Activated CD8-positive, alpha-beta T cell treated with anti-CD3 and anti-CD28 coated beads for 36 hours (primary cell): ENCODE measurements at regions of chr4 and their contacts with region 1.

Region 1: GRCh38 chr4:13548984-13549546 is 4.8 kb upstream of the NKX3-2 start:
- DNase-seq: peak; percentile 95
- ATAC-seq: peak; percentile 71
- H3K4me3 Mint-ChIP-seq: peak overlapping the region; percentile 72
- H3K27ac Mint-ChIP-seq: peak overlapping the region; percentile 8
- H3K4me1 Mint-ChIP-seq: peaks cover 27% of the 10 kb centered on the region
- H3K27me3 Mint-ChIP-seq: peaks cover 58% of the 10 kb centered on the region
- CTCF ChIP-seq: peak; percentile 87

Region 2: GRCh38 chr4:12729384-12729783 is 819.7 kb before region 1 on chr4:
- CTCF ChIA-PET with region 1: interaction called, 11 read pairs
- POLR2A ChIA-PET with region 1: no interaction called
- intact Hi-C with region 1: loop called (anchors 1 kb)
- DNase-seq: no peak
- ATAC-seq: no peak
- H3K4me3 Mint-ChIP-seq: no peak overlapping the region
- H3K27ac Mint-ChIP-seq: no peak overlapping the region
- H3K4me1 Mint-ChIP-seq: no peaks in the 10 kb centered on the region
- H3K27me3 Mint-ChIP-seq: peaks cover 11% of the 10 kb centered on the region
- CTCF ChIP-seq: peak; percentile 81

Region 3: DNA sequence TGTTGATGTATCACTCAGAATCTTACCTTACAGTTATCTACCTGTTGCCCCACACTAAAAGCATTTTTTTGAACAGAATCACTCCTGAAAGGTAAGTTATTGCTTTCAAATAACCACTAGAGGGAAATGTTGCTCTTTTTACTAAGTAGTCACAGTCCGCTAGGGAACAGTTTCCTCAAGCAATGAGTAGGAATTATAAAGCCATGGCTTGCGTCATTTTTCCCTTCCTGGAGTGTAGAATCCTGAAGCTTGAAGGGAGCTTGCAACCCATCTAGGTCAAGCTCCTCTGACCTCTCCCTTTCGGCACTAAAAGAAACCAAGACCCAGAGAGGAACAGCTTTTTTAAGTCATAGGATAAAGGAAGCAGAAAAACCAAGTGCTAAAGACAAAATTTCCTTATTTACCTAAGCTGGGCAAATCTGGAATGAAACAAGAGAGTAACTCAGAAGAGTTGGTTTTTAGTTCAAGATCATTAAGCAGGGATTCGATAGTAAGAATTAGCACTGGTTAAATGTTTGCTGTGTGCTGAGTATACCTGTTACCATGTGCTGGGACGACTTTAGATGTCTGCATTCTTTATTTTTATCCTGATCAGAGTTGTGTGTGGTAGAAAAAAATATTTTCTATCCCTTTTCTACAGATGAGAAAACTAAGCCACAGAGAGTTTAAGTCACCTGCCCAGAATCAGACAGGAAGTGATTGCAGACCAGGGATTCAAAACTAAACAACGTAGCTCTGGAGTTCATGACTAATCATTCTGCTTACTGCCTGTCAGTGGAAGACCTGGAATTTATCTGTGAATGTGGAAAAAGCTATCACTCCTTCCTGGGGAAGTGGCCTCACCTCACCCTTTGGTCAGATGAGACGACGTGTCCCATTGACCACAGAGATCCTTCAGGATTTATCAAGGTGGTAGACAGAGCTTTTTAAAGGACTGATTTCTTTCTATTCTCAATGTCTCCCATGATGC is 696.4 kb before region 1 on chr4:
- CTCF ChIA-PET with region 1: interaction called, 25 read pairs
- POLR2A ChIA-PET with region 1: no interaction called
- intact Hi-C with region 1: loop called (anchors 2 kb)
- DNase-seq: no peak
- ATAC-seq: no peak
- H3K4me3 Mint-ChIP-seq: no peak overlapping the region
- H3K27ac Mint-ChIP-seq: no peak overlapping the region
- H3K4me1 Mint-ChIP-seq: no peaks in the 10 kb centered on the region
- H3K27me3 Mint-ChIP-seq: peaks cover 7% of the 10 kb centered on the region
- CTCF ChIP-seq: peak; percentile 55

Region 4: DNA sequence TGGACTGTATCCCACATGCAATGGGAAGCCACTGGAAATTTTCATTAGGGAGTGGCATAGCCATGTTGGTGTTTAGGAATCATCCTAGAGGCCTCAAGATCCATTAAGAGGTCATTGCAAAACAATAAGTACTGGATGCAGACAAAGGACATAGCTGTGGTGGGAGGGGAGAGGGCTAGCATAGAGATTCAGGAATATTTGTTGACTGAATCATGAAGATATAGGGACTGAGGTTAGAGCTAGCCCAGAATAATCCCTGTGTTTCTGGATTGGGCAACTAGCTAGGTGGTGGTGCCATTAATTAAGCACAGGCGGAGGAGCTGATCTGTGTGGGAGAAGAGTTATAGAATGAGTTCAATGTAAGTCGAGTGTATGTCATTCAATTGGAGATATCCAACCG is 200.0 kb before region 1 on chr4:
- CTCF ChIA-PET with region 1: no interaction called
- POLR2A ChIA-PET with region 1: no interaction called
- intact Hi-C with region 1: no loop called
- DNase-seq: no peak
- ATAC-seq: no peak
- H3K4me3 Mint-ChIP-seq: no peak overlapping the region
- H3K27ac Mint-ChIP-seq: no peak overlapping the region
- H3K4me1 Mint-ChIP-seq: no peaks in the 10 kb centered on the region
- H3K27me3 Mint-ChIP-seq: no peaks in the 10 kb centered on the region
- CTCF ChIP-seq: no peak

Region 5: DNA sequence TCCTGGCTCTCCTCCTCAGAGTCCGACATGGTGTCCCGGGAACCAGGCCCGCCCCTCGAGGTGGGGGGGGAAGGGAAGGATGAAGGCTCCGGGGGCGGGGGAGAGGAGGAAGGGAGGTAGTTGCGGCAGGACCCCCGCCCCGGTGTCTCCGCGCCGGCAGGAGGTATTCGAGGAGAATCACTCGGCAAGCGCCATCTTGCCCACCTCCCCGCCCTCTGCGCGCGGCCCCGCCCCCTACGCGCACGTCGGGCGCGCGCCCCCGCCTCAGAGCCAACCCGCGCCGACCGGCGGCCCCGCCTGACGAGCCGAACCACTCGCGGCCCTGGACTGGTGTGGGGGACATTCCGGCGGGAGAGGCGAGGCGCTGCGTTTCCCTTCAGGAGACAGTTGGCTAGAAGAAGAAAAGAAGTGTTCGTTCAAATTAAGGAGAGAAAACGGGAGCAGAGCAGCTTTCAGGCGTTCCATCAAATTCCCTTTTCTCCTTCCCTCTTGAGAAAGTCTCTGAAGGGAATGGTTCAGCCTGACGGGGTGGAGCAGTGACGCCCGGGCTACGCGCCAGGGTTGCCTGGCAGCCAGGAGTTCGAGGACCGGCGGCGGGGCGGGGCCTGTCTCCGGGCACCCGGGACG is 64.8 kb before region 1 on chr4 and contains the start of gene RAB28:
- CTCF ChIA-PET with region 1: no interaction called
- POLR2A ChIA-PET with region 1: interaction called, 3 read pairs
- intact Hi-C with region 1: loop called (anchors 5 kb)
- DNase-seq: peak; percentile 93
- ATAC-seq: peak; percentile 94
- H3K4me3 Mint-ChIP-seq: peak within 1 kb of the TSS; percentile 93
- H3K27ac Mint-ChIP-seq: peak within 1 kb of the TSS; percentile 98
- H3K4me1 Mint-ChIP-seq: peaks cover 20% of the 10 kb centered on the region
- H3K27me3 Mint-ChIP-seq: peaks cover 13% of the 10 kb centered on the region
- CTCF ChIP-seq: no peak
- total RNA-seq, gene RAB28: 12.5 to 13.1 TPM

Region 6: DNA sequence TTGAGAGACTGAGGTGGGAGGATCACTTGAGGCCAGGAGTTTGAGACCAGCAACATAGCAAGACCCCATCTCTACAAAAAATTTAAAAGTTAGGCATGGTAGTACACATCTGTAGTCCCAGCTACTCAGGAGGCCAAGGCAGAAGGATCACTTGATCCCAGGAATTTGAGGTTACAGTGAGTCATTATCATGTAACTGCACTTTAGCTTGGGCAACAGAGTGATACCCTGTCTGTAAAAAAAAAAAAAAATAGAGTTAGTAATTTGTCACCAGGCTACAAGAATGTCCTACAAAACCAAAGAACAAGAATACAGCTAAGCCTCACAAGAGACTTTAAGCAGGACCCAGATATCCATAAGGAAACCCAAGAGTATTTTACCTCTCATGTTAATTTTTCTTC is 38.0 kb before region 1 on chr4:
- CTCF ChIA-PET with region 1: no interaction called
- POLR2A ChIA-PET with region 1: no interaction called
- intact Hi-C with region 1: no loop called
- DNase-seq: no peak
- ATAC-seq: no peak
- H3K4me3 Mint-ChIP-seq: no peak overlapping the region
- H3K27ac Mint-ChIP-seq: no peak overlapping the region
- H3K4me1 Mint-ChIP-seq: no peaks in the 10 kb centered on the region
- H3K27me3 Mint-ChIP-seq: peaks cover 31% of the 10 kb centered on the region
- CTCF ChIP-seq: no peak

Region 7: DNA sequence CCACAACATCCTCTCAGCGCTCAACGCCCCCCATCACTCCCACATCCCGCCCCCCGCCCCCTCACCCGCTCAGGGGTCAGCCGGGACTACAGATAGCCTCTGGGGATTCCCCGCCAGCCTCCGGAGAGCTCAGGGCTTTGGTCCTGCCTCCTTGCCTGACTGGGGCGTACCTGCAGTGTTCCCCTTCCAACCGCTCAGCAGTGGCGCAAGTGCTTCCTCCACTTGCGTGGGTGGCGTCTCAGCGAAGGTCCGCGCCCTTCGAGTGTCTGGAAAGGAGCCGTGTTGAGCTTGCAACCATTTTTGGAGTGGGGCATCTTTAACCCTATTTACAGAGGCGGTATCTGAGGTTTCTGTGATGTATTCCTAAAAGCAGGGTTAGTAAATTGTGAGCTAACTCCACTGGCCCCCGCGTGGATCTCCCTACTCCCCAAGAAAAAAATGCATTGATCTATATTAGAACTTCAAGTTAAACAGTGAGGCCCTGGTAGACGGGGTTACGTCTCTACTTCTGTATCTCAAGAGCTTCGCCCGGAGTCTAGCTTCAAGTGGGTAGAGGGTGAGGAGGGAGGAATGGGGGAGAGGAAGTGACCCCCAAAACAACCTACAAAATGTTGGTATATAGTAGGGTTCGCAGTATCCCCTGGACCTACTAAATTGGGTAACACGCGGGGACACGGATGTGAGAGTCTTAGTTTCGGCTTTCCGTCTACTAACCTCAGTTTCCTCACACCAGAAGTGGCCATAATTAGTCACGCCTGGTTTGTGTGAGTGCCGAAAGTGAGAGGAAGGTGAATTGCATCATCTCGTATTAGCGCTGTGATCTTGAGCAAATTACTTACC is 20.9 kb before region 1 on chr4:
- CTCF ChIA-PET with region 1: interaction called, 31 read pairs
- POLR2A ChIA-PET with region 1: interaction called, 4 read pairs
- intact Hi-C with region 1: no loop called
- DNase-seq: peak; percentile 60
- ATAC-seq: peak; percentile 76
- H3K4me3 Mint-ChIP-seq: peak overlapping the region; percentile 41
- H3K27ac Mint-ChIP-seq: peak overlapping the region; percentile 53
- H3K4me1 Mint-ChIP-seq: peaks cover 37% of the 10 kb centered on the region
- H3K27me3 Mint-ChIP-seq: peaks cover 86% of the 10 kb centered on the region
- CTCF ChIP-seq: no peak

Region 8: GRCh38 chr4:13678186-13678924 is 129.3 kb after region 1 on chr4:
- CTCF ChIA-PET with region 1: no interaction called
- POLR2A ChIA-PET with region 1: no interaction called
- intact Hi-C with region 1: no loop called
- DNase-seq: no peak
- ATAC-seq: no peak
- H3K4me3 Mint-ChIP-seq: no peak overlapping the region
- H3K27ac Mint-ChIP-seq: no peak overlapping the region
- H3K4me1 Mint-ChIP-seq: no peaks in the 10 kb centered on the region
- H3K27me3 Mint-ChIP-seq: peaks cover 1% of the 10 kb centered on the region
- CTCF ChIP-seq: no peak